Calu3 (cell line): ENCODE measurements at regions of chr10 and their contacts with region 1.

Region 1: DNA sequence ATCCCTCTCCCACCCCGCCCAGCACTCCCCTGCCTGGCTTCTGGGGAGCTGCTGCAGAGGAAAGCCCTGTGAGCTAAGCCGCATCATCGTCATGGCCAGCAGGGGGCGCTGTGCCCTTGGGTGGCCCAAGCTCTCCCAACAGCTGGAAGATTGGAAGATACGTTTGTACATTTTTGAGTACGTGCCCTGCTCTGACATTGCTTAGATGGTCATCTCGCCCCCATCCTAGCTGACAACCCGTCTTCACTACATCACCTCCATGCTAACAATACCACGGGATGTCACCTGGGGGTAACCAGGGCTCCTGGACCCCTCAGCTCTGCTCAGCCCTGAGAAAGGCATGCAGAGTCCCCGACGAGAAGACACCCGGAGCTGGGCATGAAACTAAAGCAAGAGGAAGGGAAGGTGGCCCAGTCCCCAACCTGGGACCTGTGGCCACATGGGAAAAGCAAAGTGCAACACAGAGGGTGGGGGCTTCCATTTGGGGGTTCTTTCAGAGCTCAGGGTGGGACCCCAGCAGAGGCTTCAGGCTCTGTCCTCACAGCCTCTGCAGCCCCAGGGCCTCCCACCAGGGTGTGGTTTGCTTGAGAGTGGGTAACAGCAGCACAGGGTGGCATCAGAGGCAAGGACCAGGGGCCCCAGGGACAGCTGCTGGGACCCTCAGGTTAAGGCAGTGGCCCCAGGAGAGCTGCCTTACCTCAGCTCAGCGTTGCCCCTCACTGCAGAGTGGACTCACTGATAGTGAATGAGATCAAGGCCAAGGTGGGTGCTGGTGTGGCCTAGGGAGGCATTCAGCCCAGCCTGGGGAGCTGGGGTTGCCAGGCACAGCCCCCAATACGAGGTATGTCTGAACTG is 136.7 kb downstream of the PTPN20 start:
- DNase-seq: peak; percentile 86
- H3K4me3 Mint-ChIP-seq: no peak overlapping the region
- H3K27ac Mint-ChIP-seq: no peak overlapping the region
- H3K4me1 Mint-ChIP-seq: no peaks in the 10 kb centered on the region
- H3K27me3 Mint-ChIP-seq: peaks cover 40% of the 10 kb centered on the region
- CTCF ChIP-seq: peak; percentile 85

Region 2: GRCh38 chr10:46992803-46993561 is 54.9 kb before region 1 on chr10:
- CTCF ChIA-PET with region 1: no interaction called
- intact Hi-C with region 1: no loop called
- DNase-seq: no peak
- H3K4me3 Mint-ChIP-seq: no peak overlapping the region
- H3K27ac Mint-ChIP-seq: no peak overlapping the region
- H3K4me1 Mint-ChIP-seq: no peaks in the 10 kb centered on the region
- H3K27me3 Mint-ChIP-seq: no peaks in the 10 kb centered on the region
- CTCF ChIP-seq: peak; percentile 42

Region 3: GRCh38 chr10:47024399-47025252 is 23.3 kb before region 1 on chr10:
- CTCF ChIA-PET with region 1: interaction called, 16 read pairs
- intact Hi-C with region 1: no loop called
- DNase-seq: peak; percentile 85
- H3K4me3 Mint-ChIP-seq: no peak overlapping the region
- H3K27ac Mint-ChIP-seq: no peak overlapping the region
- H3K4me1 Mint-ChIP-seq: no peaks in the 10 kb centered on the region
- H3K27me3 Mint-ChIP-seq: peaks cover 17% of the 10 kb centered on the region
- CTCF ChIP-seq: peak; percentile 87

Region 4: GRCh38 chr10:47133871-47134570 is 86.1 kb after region 1 on chr10:
- CTCF ChIA-PET with region 1: no interaction called
- intact Hi-C with region 1: no loop called
- DNase-seq: no peak
- H3K4me3 Mint-ChIP-seq: no peak overlapping the region
- H3K27ac Mint-ChIP-seq: no peak overlapping the region
- H3K4me1 Mint-ChIP-seq: peaks cover 29% of the 10 kb centered on the region
- H3K27me3 Mint-ChIP-seq: no peaks in the 10 kb centered on the region
- CTCF ChIP-seq: no peak

Region 5: GRCh38 chr10:47195274-47195885 is 147.5 kb after region 1 on chr10:
- CTCF ChIA-PET with region 1: interaction called, 11 read pairs
- intact Hi-C with region 1: loop called (anchors 10 kb)
- DNase-seq: no peak
- H3K4me3 Mint-ChIP-seq: no peak overlapping the region
- H3K27ac Mint-ChIP-seq: no peak overlapping the region
- H3K4me1 Mint-ChIP-seq: no peaks in the 10 kb centered on the region
- H3K27me3 Mint-ChIP-seq: peaks cover 5% of the 10 kb centered on the region
- CTCF ChIP-seq: no peak

Region 6: GRCh38 chr10:47311932-47312662 is 264.2 kb after region 1 on chr10:
- CTCF ChIA-PET with region 1: interaction called, 81 read pairs
- intact Hi-C with region 1: loop called (anchors 1 kb)
- DNase-seq: peak; percentile 92
- H3K4me3 Mint-ChIP-seq: no peak overlapping the region
- H3K27ac Mint-ChIP-seq: no peak overlapping the region
- H3K4me1 Mint-ChIP-seq: no peaks in the 10 kb centered on the region
- H3K27me3 Mint-ChIP-seq: peaks cover 47% of the 10 kb centered on the region
- CTCF ChIP-seq: peak; percentile 84